Activated B cell treated with CpG ODN at 0.5 μM for 24 hours (primary cell): ENCODE measurements at regions of chr21 and their contacts with region 1.

Region 1: GRCh38 chr21:21921421-21922232 is 923.4 kb downstream of the NCAM2 start:
- DNase-seq: no peak
- ATAC-seq: no peak
- H3K4me3 Mint-ChIP-seq: no peak overlapping the region
- H3K27ac Mint-ChIP-seq: no peak overlapping the region
- H3K4me1 Mint-ChIP-seq: no peaks in the 10 kb centered on the region
- H3K27me3 Mint-ChIP-seq: no peaks in the 10 kb centered on the region
- CTCF ChIP-seq: no peak

Region 2: DNA sequence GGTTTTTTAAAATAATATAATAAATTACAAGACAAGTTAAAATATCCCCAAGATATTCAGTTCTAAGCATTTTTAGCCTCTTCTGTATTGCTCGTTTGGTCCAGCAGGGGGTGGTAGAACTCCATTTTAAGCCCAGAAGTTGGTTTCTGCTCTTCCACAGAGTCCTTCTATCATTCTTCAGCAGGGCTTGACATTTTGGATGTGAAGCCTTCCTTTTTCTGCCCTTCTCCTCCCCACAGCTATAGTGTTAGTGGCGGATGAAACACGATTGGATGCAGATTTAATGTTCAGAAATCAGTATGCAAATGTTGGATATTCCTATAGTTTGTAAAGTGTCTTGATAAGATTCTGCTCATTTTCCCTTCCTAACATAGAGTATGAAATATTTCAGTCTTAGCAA is 922.0 kb before region 1 on chr21:
- CTCF ChIA-PET with region 1: no interaction called
- POLR2A ChIA-PET with region 1: no interaction called
- intact Hi-C with region 1: loop called (anchors 5 kb)
- DNase-seq: no peak
- ATAC-seq: no peak
- H3K4me3 Mint-ChIP-seq: no peak overlapping the region
- H3K27ac Mint-ChIP-seq: no peak overlapping the region
- H3K4me1 Mint-ChIP-seq: peaks cover 16% of the 10 kb centered on the region
- H3K27me3 Mint-ChIP-seq: peaks cover 21% of the 10 kb centered on the region
- CTCF ChIP-seq: no peak

Region 3: DNA sequence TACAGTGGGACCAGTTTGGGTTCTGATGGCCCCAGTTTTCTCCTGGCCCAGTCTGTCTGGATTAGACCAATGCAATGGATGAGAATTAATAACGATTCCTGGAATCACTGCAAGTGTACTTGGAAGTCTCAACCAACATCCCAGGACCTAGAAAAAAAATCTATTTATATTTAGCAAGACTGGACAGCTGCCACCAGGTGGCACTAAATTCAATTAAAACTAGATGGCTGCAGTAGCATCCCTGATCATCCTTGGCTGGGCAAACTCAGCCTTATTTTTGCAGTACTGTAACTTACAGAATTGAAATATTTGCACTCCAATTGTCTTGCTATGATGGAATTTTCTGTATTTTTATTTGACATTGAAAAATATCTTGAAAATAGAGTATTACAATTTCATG is 757.7 kb before region 1 on chr21:
- CTCF ChIA-PET with region 1: no interaction called
- POLR2A ChIA-PET with region 1: no interaction called
- intact Hi-C with region 1: loop called (anchors 2 kb)
- DNase-seq: no peak
- ATAC-seq: no peak
- H3K4me3 Mint-ChIP-seq: no peak overlapping the region
- H3K27ac Mint-ChIP-seq: no peak overlapping the region
- H3K4me1 Mint-ChIP-seq: peaks cover 7% of the 10 kb centered on the region
- H3K27me3 Mint-ChIP-seq: no peaks in the 10 kb centered on the region
- CTCF ChIP-seq: no peak

Region 4: GRCh38 chr21:21851657-21852056 is 70.0 kb before region 1 on chr21:
- CTCF ChIA-PET with region 1: no interaction called
- POLR2A ChIA-PET with region 1: no interaction called
- intact Hi-C with region 1: no loop called
- DNase-seq: no peak
- ATAC-seq: no peak
- H3K4me3 Mint-ChIP-seq: no peak overlapping the region
- H3K27ac Mint-ChIP-seq: no peak overlapping the region
- H3K4me1 Mint-ChIP-seq: no peaks in the 10 kb centered on the region
- H3K27me3 Mint-ChIP-seq: no peaks in the 10 kb centered on the region
- CTCF ChIP-seq: no peak